ENCODE measurements at regions of chr5 and their contacts with region 1.

Region 1: GRCh38 chr5:130109152-130109551 is 204.9 kb downstream of the CHSY3 start:
- DNase-seq: peak; percentile 65
- H3K4me3 Mint-ChIP-seq: no peak overlapping the region
- H3K27ac Mint-ChIP-seq: no peak overlapping the region
- H3K4me1 Mint-ChIP-seq: no peaks in the 10 kb centered on the region
- H3K27me3 Mint-ChIP-seq: no peaks in the 10 kb centered on the region
- CTCF ChIP-seq: peak; percentile 83

Region 2: GRCh38 chr5:130034566-130035210 is 74.5 kb before region 1 on chr5:
- CTCF ChIA-PET with region 1: no interaction called
- POLR2A ChIA-PET with region 1: no interaction called
- intact Hi-C with region 1: no loop called
- DNase-seq: peak; percentile 40
- H3K4me3 Mint-ChIP-seq: no peak overlapping the region
- H3K27ac Mint-ChIP-seq: no peak overlapping the region
- H3K4me1 Mint-ChIP-seq: peaks cover 8% of the 10 kb centered on the region
- H3K27me3 Mint-ChIP-seq: no peaks in the 10 kb centered on the region
- CTCF ChIP-seq: no peak

Region 3: GRCh38 chr5:130066644-130067043 is 42.5 kb before region 1 on chr5:
- CTCF ChIA-PET with region 1: no interaction called
- POLR2A ChIA-PET with region 1: no interaction called
- intact Hi-C with region 1: no loop called
- DNase-seq: no peak
- H3K4me3 Mint-ChIP-seq: no peak overlapping the region
- H3K27ac Mint-ChIP-seq: no peak overlapping the region
- H3K4me1 Mint-ChIP-seq: no peaks in the 10 kb centered on the region
- H3K27me3 Mint-ChIP-seq: no peaks in the 10 kb centered on the region
- CTCF ChIP-seq: no peak

Region 4: GRCh38 chr5:130099008-130099407 is 10.1 kb before region 1 on chr5:
- CTCF ChIA-PET with region 1: interaction called, 12 read pairs
- POLR2A ChIA-PET with region 1: interaction called, 4 read pairs
- intact Hi-C with region 1: no loop called
- DNase-seq: no peak
- H3K4me3 Mint-ChIP-seq: no peak overlapping the region
- H3K27ac Mint-ChIP-seq: no peak overlapping the region
- H3K4me1 Mint-ChIP-seq: peaks cover 4% of the 10 kb centered on the region
- H3K27me3 Mint-ChIP-seq: no peaks in the 10 kb centered on the region
- CTCF ChIP-seq: no peak

Region 5: GRCh38 chr5:130135506-130135905 is 26.4 kb after region 1 on chr5:
- CTCF ChIA-PET with region 1: interaction called, 15 read pairs
- POLR2A ChIA-PET with region 1: interaction called, 3 read pairs
- intact Hi-C with region 1: no loop called
- DNase-seq: peak; percentile 81
- H3K4me3 Mint-ChIP-seq: no peak overlapping the region
- H3K27ac Mint-ChIP-seq: peak overlapping the region; percentile 73
- H3K4me1 Mint-ChIP-seq: peaks cover 29% of the 10 kb centered on the region
- H3K27me3 Mint-ChIP-seq: no peaks in the 10 kb centered on the region
- CTCF ChIP-seq: no peak

Region 6: GRCh38 chr5:130164966-130165365 is 55.8 kb after region 1 on chr5:
- CTCF ChIA-PET with region 1: no interaction called
- POLR2A ChIA-PET with region 1: no interaction called
- intact Hi-C with region 1: no loop called
- DNase-seq: peak; percentile 86
- H3K4me3 Mint-ChIP-seq: no peak overlapping the region
- H3K27ac Mint-ChIP-seq: no peak overlapping the region
- H3K4me1 Mint-ChIP-seq: peaks cover 6% of the 10 kb centered on the region
- H3K27me3 Mint-ChIP-seq: no peaks in the 10 kb centered on the region
- CTCF ChIP-seq: no peak

Region 7: GRCh38 chr5:130541617-130542221 is 432.6 kb after region 1 on chr5:
- CTCF ChIA-PET with region 1: interaction called, 16 read pairs
- POLR2A ChIA-PET with region 1: interaction called, 3 read pairs
- intact Hi-C with region 1: loop called (anchors 1 kb)
- DNase-seq: peak; percentile 89
- H3K4me3 Mint-ChIP-seq: peak overlapping the region; percentile 4
- H3K27ac Mint-ChIP-seq: peak overlapping the region; percentile 25
- H3K4me1 Mint-ChIP-seq: peaks cover 31% of the 10 kb centered on the region
- H3K27me3 Mint-ChIP-seq: no peaks in the 10 kb centered on the region
- CTCF ChIP-seq: no peak

Region 8: DNA sequence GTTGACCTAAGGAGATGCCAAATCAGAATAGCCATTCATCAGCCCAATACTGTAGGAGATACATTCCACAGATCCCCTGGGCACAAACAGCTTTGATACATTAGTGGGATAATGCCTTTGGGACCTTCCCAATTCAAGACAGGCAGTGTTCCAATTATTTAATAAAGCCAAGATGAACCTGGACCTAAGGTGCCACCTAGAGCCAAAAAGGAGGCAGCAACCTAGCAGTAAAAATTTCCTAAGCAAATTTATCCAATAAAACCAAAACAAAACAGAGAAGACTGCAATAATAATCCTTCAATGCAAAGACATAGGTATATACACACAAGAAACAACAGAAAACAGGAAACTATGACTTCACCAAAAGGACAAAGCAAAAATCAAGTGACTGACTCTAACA is 802.9 kb after region 1 on chr5:
- CTCF ChIA-PET with region 1: interaction called, 4 read pairs
- POLR2A ChIA-PET with region 1: no interaction called
- intact Hi-C with region 1: loop called (anchors 1 kb)
- DNase-seq: peak; percentile 54
- H3K4me3 Mint-ChIP-seq: no peak overlapping the region
- H3K27ac Mint-ChIP-seq: no peak overlapping the region
- H3K4me1 Mint-ChIP-seq: no peaks in the 10 kb centered on the region
- H3K27me3 Mint-ChIP-seq: no peaks in the 10 kb centered on the region
- CTCF ChIP-seq: peak; percentile 41

Region 9: GRCh38 chr5:131417240-131417869 is 1308.2 kb after region 1 on chr5:
- CTCF ChIA-PET with region 1: interaction called, 5 read pairs
- POLR2A ChIA-PET with region 1: no interaction called
- intact Hi-C with region 1: loop called (anchors 1 kb)
- DNase-seq: peak; percentile 85
- H3K4me3 Mint-ChIP-seq: no peak overlapping the region
- H3K27ac Mint-ChIP-seq: no peak overlapping the region
- H3K4me1 Mint-ChIP-seq: peaks cover 5% of the 10 kb centered on the region
- H3K27me3 Mint-ChIP-seq: no peaks in the 10 kb centered on the region
- CTCF ChIP-seq: peak; percentile 89

Measured in MCF 10A (cell line).